WTC11 (cell line): ENCODE measurements at regions of chr3 and their contacts with region 1.

Region 1: DNA sequence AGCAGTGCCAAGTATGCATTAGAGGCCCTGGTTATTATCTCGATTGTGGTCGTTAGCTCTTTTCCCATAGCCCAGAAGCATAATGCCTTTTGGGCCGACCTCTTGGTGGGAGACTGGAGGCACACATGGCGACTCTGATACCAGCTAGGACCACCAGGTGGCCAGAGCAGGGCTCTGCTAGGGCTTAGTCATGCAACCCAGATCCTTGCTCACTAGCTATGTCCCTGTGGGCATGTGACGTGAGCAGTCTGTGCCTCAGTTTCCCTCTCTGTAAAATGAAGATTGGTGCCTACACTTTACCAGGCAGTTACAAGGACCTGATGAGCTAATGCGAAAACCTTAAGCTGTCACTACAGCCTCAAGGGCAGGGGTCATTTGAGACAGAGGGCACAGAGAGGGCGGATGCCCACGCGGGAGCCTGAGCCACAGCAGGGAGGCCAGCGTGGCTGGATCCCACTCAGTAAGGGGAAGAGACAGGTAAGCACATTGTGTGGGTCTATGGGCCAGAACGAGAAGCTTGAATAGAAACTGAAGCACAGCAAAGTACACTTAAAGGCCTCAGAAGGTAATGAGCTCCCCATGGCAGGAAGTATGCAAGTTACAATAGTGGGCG is 8.8 kb downstream of the KLF15 start:
- DNase-seq: peak; percentile 50
- ATAC-seq: peak; percentile 71
- H3K4me3 Mint-ChIP-seq: no peak overlapping the region
- H3K27ac Mint-ChIP-seq: no peak overlapping the region; the same call in 1 of the 2 replicates
- H3K4me1 Mint-ChIP-seq: no peaks in the 10 kb centered on the region
- H3K27me3 Mint-ChIP-seq: no peaks in the 10 kb centered on the region
- CTCF ChIP-seq: no peak

Region 2: GRCh38 chr3:126267226-126267975 is 81.0 kb before region 1 on chr3:
- CTCF ChIA-PET with region 1: interaction called, 14 read pairs
- POLR2A ChIA-PET with region 1: no interaction called
- DNase-seq: peak; percentile 85
- ATAC-seq: peak; percentile 76
- H3K4me3 Mint-ChIP-seq: peak overlapping the region; percentile 72
- H3K27ac Mint-ChIP-seq: peak overlapping the region; percentile 97
- H3K4me1 Mint-ChIP-seq: peaks cover 43% of the 10 kb centered on the region
- H3K27me3 Mint-ChIP-seq: peaks cover 7% of the 10 kb centered on the region
- CTCF ChIP-seq: no peak

Region 3: GRCh38 chr3:126380011-126380768 is 31.8 kb after region 1 on chr3:
- CTCF ChIA-PET with region 1: interaction called, 12 read pairs
- POLR2A ChIA-PET with region 1: no interaction called
- DNase-seq: peak; percentile 11
- ATAC-seq: 0 out of 2 replicates have a peak, but pooled peaks have one; percentile 22
- H3K4me3 Mint-ChIP-seq: no peak overlapping the region
- H3K27ac Mint-ChIP-seq: no peak overlapping the region
- H3K4me1 Mint-ChIP-seq: peaks cover 25% of the 10 kb centered on the region
- H3K27me3 Mint-ChIP-seq: peaks cover 2% of the 10 kb centered on the region; the same call in 1 of the 2 replicates
- CTCF ChIP-seq: no peak

Region 4: DNA sequence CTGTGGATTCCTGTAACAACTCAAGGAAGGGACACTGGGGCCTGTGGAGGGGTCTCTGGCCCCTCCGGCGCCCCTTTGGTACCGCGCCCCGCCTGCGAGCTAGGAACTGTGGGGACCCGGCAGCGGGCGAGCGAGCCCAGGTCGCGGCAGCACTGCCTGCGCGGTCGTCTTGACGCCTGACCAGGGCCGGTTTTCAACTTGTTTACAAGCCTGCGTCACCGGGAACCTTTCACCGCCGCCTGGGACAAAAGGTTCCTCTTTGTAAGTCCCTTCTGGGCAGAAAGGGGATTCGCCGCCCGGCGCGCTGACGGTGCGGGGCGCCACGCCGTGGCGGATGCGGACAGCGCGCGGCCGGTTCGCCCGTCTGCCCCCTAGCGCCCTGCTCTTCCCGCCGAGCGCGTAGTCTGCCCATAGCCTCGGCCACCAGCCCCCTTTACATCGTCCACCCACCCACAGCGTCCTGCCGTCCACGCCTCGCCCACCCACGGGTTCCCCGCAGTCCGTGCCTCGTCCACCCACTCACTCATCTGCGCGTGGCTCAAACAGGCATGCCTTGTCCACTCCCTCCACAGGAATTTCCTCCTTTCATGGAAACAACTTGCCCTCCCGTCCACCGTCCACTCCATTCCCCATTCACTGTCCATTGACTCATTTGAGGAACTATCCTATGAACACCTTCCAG is 40.8 kb after region 1 on chr3:
- CTCF ChIA-PET with region 1: interaction called, 18 read pairs
- POLR2A ChIA-PET with region 1: no interaction called
- DNase-seq: peak; percentile 89
- ATAC-seq: peak; percentile 91
- H3K4me3 Mint-ChIP-seq: peak overlapping the region; percentile 52
- H3K27ac Mint-ChIP-seq: 0 out of 2 replicates have a peak overlapping the region, but pooled peaks have one; percentile 16
- H3K4me1 Mint-ChIP-seq: peaks cover 13% of the 10 kb centered on the region
- H3K27me3 Mint-ChIP-seq: peaks cover 34% of the 10 kb centered on the region
- CTCF ChIP-seq: peak; percentile 31; the same call in 1 of the 2 replicates